Caco-2 (cell line): ENCODE measurements at regions of chr6 and their contacts with region 1.

Region 1: DNA sequence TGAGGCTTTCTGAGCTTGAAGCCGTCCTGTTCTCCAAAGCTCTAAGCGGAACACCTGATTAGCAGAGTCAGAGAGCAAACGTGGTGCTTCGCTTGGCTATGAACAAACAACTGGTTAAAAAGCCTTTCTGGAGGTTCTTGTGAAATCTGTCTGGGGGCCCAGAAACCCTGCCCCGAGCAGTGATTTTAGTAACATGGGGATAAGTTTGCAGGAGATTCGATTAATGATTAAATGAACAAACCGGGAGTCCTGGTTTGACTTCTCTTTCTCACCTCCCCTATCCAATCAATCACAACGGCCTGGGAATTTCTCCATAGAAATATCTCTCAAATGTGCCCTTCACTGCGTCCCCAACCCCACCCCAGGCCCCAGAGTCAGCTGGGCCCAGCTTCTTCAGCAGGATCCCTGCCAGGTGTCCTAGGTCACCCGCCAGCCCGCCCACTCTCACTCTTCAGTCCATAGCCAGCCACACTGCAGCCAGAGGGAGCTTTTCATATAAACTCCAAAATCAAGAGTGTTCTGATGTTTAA is 43.6 kb downstream of the ZDHHC14 start:
- DNase-seq: peak; percentile 77 to 82
- H3K4me3 ChIP-seq: 0 out of 2 replicates have a peak overlapping the region, but pooled peaks have one; percentile 5
- H3K4me3 Mint-ChIP-seq: peak overlapping the region; percentile 63
- H3K27ac Mint-ChIP-seq: peak overlapping the region; percentile 92
- H3K4me1 ChIP-seq: peaks cover 29% of the 10 kb centered on the region
- H3K4me1 Mint-ChIP-seq: peaks cover 56% of the 10 kb centered on the region
- H3K27me3 ChIP-seq: no peaks in the 10 kb centered on the region
- H3K27me3 Mint-ChIP-seq: no peaks in the 10 kb centered on the region
- CTCF ChIP-seq: peak in 1 of 2 experiments; percentile 17

Region 2: DNA sequence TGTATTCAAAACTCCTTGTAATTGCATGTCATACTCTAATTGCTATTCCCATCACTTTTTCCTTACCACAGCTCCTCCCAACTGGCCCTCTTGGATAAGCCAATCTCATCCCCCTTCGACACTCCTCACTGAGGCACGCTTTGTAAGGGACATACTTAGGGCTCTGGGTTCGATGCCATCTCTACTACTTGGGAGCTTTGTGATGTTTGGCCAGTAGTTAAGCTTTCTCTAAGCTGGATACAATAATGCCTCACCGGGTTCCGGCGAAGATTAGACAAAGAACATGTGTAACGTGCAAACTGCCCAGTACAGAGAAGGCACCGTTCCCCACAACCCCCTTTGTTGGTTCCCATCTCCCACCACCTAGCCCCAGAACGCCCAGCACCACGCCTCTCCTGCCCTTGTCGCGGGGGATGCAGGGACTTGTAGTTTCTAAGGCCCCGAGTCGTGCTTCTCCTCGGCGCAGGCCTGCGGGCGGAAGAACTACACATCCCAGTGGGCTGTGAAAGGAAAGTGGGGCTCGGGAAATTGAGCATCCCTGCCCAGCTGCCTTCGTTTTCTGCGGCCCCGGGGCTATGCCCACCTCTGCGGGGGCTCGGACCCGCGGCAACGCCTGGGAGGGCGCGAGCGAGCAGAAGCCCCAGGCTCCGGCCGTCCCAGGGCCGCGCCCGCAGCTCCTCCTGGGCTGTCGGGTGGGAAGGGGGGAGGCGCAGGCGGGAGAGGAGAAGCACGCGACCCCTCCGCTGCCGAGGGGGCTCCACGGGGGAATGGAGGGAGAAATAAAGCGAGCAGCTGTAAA is 44.7 kb before region 1 on chr6:
- CTCF ChIA-PET with region 1: no interaction called
- POLR2A ChIA-PET with region 1: interaction called, 4 read pairs
- intact Hi-C with region 1: loop called (anchors 1 kb)
- DNase-seq: peak; percentile 88
- H3K4me3 ChIP-seq: peak overlapping the region; percentile 98
- H3K4me3 Mint-ChIP-seq: peak overlapping the region; percentile 83
- H3K27ac Mint-ChIP-seq: no peak overlapping the region
- H3K4me1 ChIP-seq: peaks cover 7% of the 10 kb centered on the region; the same call in 1 of the 2 replicates
- H3K4me1 Mint-ChIP-seq: peaks cover 31% of the 10 kb centered on the region
- H3K27me3 ChIP-seq: no peaks in the 10 kb centered on the region
- H3K27me3 Mint-ChIP-seq: no peaks in the 10 kb centered on the region
- CTCF ChIP-seq: no peak

Region 3: GRCh38 chr6:157471895-157472686 is 47.5 kb after region 1 on chr6:
- CTCF ChIA-PET with region 1: no interaction called
- POLR2A ChIA-PET with region 1: no interaction called
- intact Hi-C with region 1: no loop called
- DNase-seq: no peak
- H3K4me3 ChIP-seq: no peak overlapping the region
- H3K4me3 Mint-ChIP-seq: no peak overlapping the region
- H3K27ac Mint-ChIP-seq: no peak overlapping the region
- H3K4me1 ChIP-seq: no peaks in the 10 kb centered on the region; the same call in 1 of the 2 replicates
- H3K4me1 Mint-ChIP-seq: peaks cover 6% of the 10 kb centered on the region
- H3K27me3 ChIP-seq: no peaks in the 10 kb centered on the region
- H3K27me3 Mint-ChIP-seq: no peaks in the 10 kb centered on the region
- CTCF ChIP-seq: no peak

Region 4: DNA sequence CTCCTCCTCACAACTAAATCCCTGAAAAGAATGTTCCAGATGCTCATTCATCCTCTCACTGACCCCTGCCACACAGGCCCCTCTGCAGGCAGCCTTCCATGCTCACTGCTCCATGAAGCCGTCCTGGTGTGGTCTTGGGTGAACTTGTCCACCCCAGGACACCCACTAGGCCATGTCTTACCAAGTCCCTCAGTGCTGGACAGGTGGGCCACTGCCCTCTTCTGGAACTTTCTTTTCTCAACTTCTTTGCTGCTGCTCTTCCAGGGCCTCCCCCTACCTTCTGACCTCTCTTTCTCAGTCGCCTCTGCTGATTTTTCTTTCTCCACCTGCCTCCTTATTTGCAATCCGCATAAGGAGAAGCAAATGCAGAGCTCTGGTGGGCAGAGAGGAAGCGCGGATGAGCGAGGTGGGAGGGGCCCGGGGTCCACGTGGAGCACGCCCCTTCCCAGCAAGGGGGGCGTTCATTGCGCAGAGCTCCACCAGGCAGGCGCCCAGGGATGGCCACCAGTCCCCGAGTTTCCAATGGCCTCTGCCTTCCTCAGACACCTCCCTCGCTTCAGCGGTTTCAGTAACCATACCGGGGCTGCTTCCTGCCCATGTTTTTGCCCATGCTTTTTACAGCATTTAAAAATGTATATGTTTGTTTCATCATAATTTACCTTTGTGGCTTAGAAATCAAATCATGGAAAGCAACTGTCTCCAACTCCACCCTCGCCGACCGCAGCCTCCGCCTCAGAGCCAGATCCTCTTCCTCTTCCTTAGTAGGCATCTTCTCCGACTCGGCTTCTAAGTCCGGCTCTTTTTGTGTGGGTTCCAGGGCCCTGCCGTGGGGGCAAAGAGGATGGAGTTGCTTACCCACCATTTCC is 86.0 kb after region 1 on chr6:
- CTCF ChIA-PET with region 1: no interaction called
- POLR2A ChIA-PET with region 1: no interaction called
- intact Hi-C with region 1: no loop called
- DNase-seq: no peak
- H3K4me3 ChIP-seq: no peak overlapping the region
- H3K4me3 Mint-ChIP-seq: no peak overlapping the region
- H3K27ac Mint-ChIP-seq: peak overlapping the region; percentile 46
- H3K4me1 ChIP-seq: peaks cover 16% of the 10 kb centered on the region
- H3K4me1 Mint-ChIP-seq: peaks cover 17% of the 10 kb centered on the region
- H3K27me3 ChIP-seq: no peaks in the 10 kb centered on the region
- H3K27me3 Mint-ChIP-seq: no peaks in the 10 kb centered on the region
- CTCF ChIP-seq: no peak

Region 5: DNA sequence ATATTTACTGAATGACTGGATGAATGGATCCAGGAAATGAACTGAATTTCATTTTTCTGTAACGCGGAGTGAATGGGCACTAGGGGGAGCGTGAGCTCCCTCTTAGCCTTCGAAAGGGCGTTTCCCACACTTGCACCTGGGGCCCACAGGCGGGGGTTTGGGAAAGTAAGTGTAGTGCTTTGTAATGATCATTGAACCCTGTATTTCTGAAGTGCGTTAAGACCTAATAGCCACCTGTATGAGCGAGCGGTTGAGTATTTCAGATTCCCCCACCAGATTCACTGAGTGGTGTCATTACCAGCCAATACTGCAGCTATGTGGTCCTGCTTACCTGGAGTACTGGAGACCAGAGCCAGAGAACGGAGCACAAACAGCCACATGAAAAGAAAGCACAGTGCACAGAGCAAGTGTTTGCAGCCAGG is 1235.8 kb after region 1 on chr6:
- CTCF ChIA-PET with region 1: no interaction called
- POLR2A ChIA-PET with region 1: no interaction called
- intact Hi-C with region 1: no loop called
- DNase-seq: peak in 1 of 2 experiments; percentile 50
- H3K4me3 ChIP-seq: no peak overlapping the region
- H3K4me3 Mint-ChIP-seq: no peak overlapping the region
- H3K27ac Mint-ChIP-seq: no peak overlapping the region
- H3K4me1 ChIP-seq: 0 out of 2 replicates have a peak, but pooled peaks cover 3% of the 10 kb centered on the region
- H3K4me1 Mint-ChIP-seq: peaks cover 7% of the 10 kb centered on the region
- H3K27me3 ChIP-seq: no peaks in the 10 kb centered on the region
- H3K27me3 Mint-ChIP-seq: no peaks in the 10 kb centered on the region
- CTCF ChIP-seq: peak; percentile 58 to 62